Activated CD8-positive, alpha-beta T cell treated with anti-CD3 and anti-CD28 coated beads for 36 hours (primary cell): ENCODE measurements at regions of chr17 and their contacts with region 1.

Region 1: GRCh38 chr17:35764123-35764991 is 3.7 kb downstream of the C17orf50 start:
- DNase-seq: peak; percentile 90
- ATAC-seq: peak; percentile 96
- H3K4me3 Mint-ChIP-seq: peak overlapping the region; percentile 88
- H3K27ac Mint-ChIP-seq: peak overlapping the region; percentile 76
- H3K4me1 Mint-ChIP-seq: peaks cover 10% of the 10 kb centered on the region
- H3K27me3 Mint-ChIP-seq: no peaks in the 10 kb centered on the region
- CTCF ChIP-seq: peak; percentile 89

Region 2: GRCh38 chr17:35612924-35613521 is 151.3 kb before region 1 on chr17:
- CTCF ChIA-PET with region 1: interaction called, 19 read pairs
- POLR2A ChIA-PET with region 1: no interaction called
- intact Hi-C with region 1: no loop called
- DNase-seq: peak; percentile 70
- ATAC-seq: no peak
- H3K4me3 Mint-ChIP-seq: no peak overlapping the region
- H3K27ac Mint-ChIP-seq: no peak overlapping the region
- H3K4me1 Mint-ChIP-seq: peaks cover 3% of the 10 kb centered on the region
- H3K27me3 Mint-ChIP-seq: no peaks in the 10 kb centered on the region
- CTCF ChIP-seq: peak; percentile 70

Region 3: GRCh38 chr17:35655303-35655702 is 109.1 kb before region 1 on chr17:
- CTCF ChIA-PET with region 1: no interaction called
- POLR2A ChIA-PET with region 1: no interaction called
- intact Hi-C with region 1: no loop called
- DNase-seq: no peak
- ATAC-seq: no peak
- H3K4me3 Mint-ChIP-seq: no peak overlapping the region
- H3K27ac Mint-ChIP-seq: no peak overlapping the region
- H3K4me1 Mint-ChIP-seq: peaks cover 4% of the 10 kb centered on the region
- H3K27me3 Mint-ChIP-seq: no peaks in the 10 kb centered on the region
- CTCF ChIP-seq: no peak

Region 4: DNA sequence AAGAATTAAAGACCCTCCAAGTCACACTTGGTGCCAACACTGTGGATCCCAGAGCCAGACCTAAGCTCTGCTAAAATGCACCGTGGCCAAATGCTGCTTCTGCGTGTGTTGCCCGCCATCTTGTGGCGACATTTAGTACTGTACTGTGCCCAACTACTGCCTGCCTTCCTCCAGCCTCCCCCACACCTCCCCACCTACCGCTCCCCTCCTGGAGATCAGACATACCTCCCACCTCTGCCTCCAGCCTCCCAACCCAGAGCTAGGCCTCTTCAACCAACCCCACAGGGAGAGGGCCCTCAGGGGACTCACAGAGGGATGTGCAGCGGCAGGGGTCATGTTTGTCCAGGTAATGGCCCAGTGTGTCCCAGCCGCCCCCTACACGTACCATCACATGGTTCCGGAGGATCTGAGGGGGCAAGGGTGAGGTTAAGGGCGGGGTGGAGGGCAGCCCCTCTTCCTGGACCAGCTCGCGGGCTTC is 16.8 kb before region 1 on chr17:
- CTCF ChIA-PET with region 1: interaction called, 80 read pairs
- POLR2A ChIA-PET with region 1: no interaction called
- intact Hi-C with region 1: no loop called
- DNase-seq: peak; percentile 93
- ATAC-seq: peak; percentile 88
- H3K4me3 Mint-ChIP-seq: peak overlapping the region; percentile 24
- H3K27ac Mint-ChIP-seq: no peak overlapping the region
- H3K4me1 Mint-ChIP-seq: peaks cover 33% of the 10 kb centered on the region
- H3K27me3 Mint-ChIP-seq: peaks cover 43% of the 10 kb centered on the region
- CTCF ChIP-seq: peak; percentile 88

Region 5: DNA sequence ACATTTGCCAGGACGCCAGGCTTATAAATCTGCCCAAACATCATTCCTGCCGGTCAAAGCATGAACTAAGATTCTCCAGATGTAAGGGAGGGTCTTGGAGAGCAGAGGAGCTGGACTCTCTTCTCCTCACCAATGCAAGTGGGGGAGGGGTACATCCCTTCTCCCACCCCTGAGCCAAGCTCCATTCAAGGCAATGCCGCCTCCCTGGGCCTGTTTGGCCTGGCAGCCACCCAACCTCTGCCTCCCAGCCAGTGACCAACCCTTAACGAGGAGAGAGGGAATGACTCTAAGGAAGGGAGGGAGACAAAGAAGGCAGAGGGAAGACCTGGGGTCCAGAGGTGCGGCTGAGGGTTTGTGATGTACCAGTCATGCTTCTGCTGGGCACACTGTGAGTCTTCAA is 10.1 kb after region 1 on chr17:
- CTCF ChIA-PET with region 1: interaction called, 16 read pairs
- POLR2A ChIA-PET with region 1: interaction called, 5 read pairs
- intact Hi-C with region 1: no loop called
- DNase-seq: no peak
- ATAC-seq: no peak
- H3K4me3 Mint-ChIP-seq: no peak overlapping the region
- H3K27ac Mint-ChIP-seq: no peak overlapping the region
- H3K4me1 Mint-ChIP-seq: no peaks in the 10 kb centered on the region
- H3K27me3 Mint-ChIP-seq: peaks cover 6% of the 10 kb centered on the region
- CTCF ChIP-seq: no peak

Region 6: GRCh38 chr17:35788504-35789368 is 24.4 kb after region 1 on chr17:
- CTCF ChIA-PET with region 1: interaction called, 104 read pairs
- POLR2A ChIA-PET with region 1: interaction called, 3 read pairs
- intact Hi-C with region 1: no loop called
- DNase-seq: no peak
- ATAC-seq: peak; percentile 58
- H3K4me3 Mint-ChIP-seq: no peak overlapping the region
- H3K27ac Mint-ChIP-seq: no peak overlapping the region
- H3K4me1 Mint-ChIP-seq: peaks cover 12% of the 10 kb centered on the region
- H3K27me3 Mint-ChIP-seq: peaks cover 5% of the 10 kb centered on the region
- CTCF ChIP-seq: no peak

Region 7: GRCh38 chr17:35801583-35802224 is 37.3 kb after region 1 on chr17:
- CTCF ChIA-PET with region 1: interaction called, 292 read pairs
- POLR2A ChIA-PET with region 1: interaction called, 8 read pairs
- intact Hi-C with region 1: loop called (anchors 1 kb)
- DNase-seq: peak; percentile 25
- ATAC-seq: peak; percentile 5
- H3K4me3 Mint-ChIP-seq: no peak overlapping the region
- H3K27ac Mint-ChIP-seq: peak overlapping the region; percentile 83
- H3K4me1 Mint-ChIP-seq: peaks cover 40% of the 10 kb centered on the region
- H3K27me3 Mint-ChIP-seq: peaks cover 4% of the 10 kb centered on the region
- CTCF ChIP-seq: no peak

Region 8: DNA sequence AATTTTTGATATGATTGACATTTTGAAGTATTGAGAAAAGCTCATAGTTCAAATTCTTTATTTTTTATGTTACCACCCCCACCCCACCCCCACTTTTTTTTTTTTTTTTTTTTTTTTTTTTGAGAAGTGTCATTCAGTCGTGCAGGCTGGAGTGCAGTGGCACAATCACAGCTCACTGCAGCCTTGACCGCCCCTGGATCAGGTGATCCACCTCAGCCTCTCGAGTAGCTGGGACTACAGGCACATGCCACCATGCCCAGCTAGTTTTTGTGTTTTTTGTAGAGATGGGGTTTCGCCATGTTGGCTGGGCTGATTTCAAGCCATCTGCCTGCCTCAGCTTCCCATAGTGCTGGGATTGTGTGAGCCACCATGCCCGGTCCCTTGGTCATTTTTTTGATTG is 52.4 kb after region 1 on chr17:
- CTCF ChIA-PET with region 1: interaction called, 21 read pairs
- POLR2A ChIA-PET with region 1: interaction called, 4 read pairs
- intact Hi-C with region 1: no loop called
- DNase-seq: no peak
- ATAC-seq: no peak
- H3K4me3 Mint-ChIP-seq: no peak overlapping the region
- H3K27ac Mint-ChIP-seq: no peak overlapping the region
- H3K4me1 Mint-ChIP-seq: peaks cover 57% of the 10 kb centered on the region
- H3K27me3 Mint-ChIP-seq: no peaks in the 10 kb centered on the region
- CTCF ChIP-seq: no peak